ENCODE measurements at regions of chr10 and their contacts with region 1.

Region 1: GRCh38 chr10:124588736-124589490 is 127.3 kb downstream of the LHPP start:
- DNase-seq: peak in 1 of 2 experiments; percentile 7
- H3K4me3 ChIP-seq: no peak overlapping the region
- H3K27ac ChIP-seq: no peak overlapping the region
- H3K4me1 ChIP-seq: no peaks in the 10 kb centered on the region
- H3K27me3 ChIP-seq: no peaks in the 10 kb centered on the region
- CTCF ChIP-seq: no peak

Region 2: GRCh38 chr10:124791378-124792348 is 202.8 kb after region 1 on chr10 and contains the start of gene EEF1AKMT2:
- CTCF ChIA-PET with region 1: no interaction called
- POLR2A ChIA-PET with region 1: interaction called, 36 read pairs
- intact Hi-C with region 1: no loop called
- DNase-seq: peak; percentile 60 to 79
- H3K4me3 ChIP-seq: peak within 1 kb of the TSS; percentile 89
- H3K27ac ChIP-seq: peak within 1 kb of the TSS; percentile 47
- H3K4me1 ChIP-seq: peaks cover 6% of the 10 kb centered on the region; the same call in 1 of the 2 replicates
- H3K27me3 ChIP-seq: no peaks in the 10 kb centered on the region
- CTCF ChIP-seq: peak; percentile 39; the same call in 1 of the 2 replicates
- total RNA-seq, gene EEF1AKMT2: 16.4 and 18.4 TPM in 2 replicates

Region 3: GRCh38 chr10:124837687-124838086 is 248.8 kb after region 1 on chr10:
- CTCF ChIA-PET with region 1: interaction called, 14 read pairs
- POLR2A ChIA-PET with region 1: no interaction called
- intact Hi-C with region 1: no loop called
- DNase-seq: no peak
- H3K4me3 ChIP-seq: no peak overlapping the region
- H3K27ac ChIP-seq: no peak overlapping the region
- H3K4me1 ChIP-seq: no peaks in the 10 kb centered on the region
- H3K27me3 ChIP-seq: no peaks in the 10 kb centered on the region
- CTCF ChIP-seq: no peak

Measured in PC-9 (cell line).